ENCODE measurements at regions of chr16 and their contacts with region 1.

Region 1: GRCh38 chr16:66515596-66516510 is 34.1 kb downstream of the TK2 start:
- DNase-seq: peak; percentile 54
- H3K4me3 Mint-ChIP-seq: peak overlapping the region; percentile 52
- H3K27ac Mint-ChIP-seq: peak overlapping the region; percentile 91
- H3K4me1 Mint-ChIP-seq: peaks cover 66% of the 10 kb centered on the region
- H3K27me3 Mint-ChIP-seq: peaks cover 4% of the 10 kb centered on the region

Region 2: GRCh38 chr16:66416939-66417700 is 98.7 kb before region 1 on chr16:
- CTCF ChIA-PET with region 1: no interaction called
- DNase-seq: no peak
- H3K4me3 Mint-ChIP-seq: no peak overlapping the region
- H3K27ac Mint-ChIP-seq: no peak overlapping the region
- H3K4me1 Mint-ChIP-seq: peaks cover 9% of the 10 kb centered on the region
- H3K27me3 Mint-ChIP-seq: peaks cover 25% of the 10 kb centered on the region

Region 3: GRCh38 chr16:66483689-66484481 is 32.0 kb before region 1 on chr16:
- CTCF ChIA-PET with region 1: interaction called, 11 read pairs
- DNase-seq: peak; percentile 84
- H3K4me3 Mint-ChIP-seq: no peak overlapping the region
- H3K27ac Mint-ChIP-seq: no peak overlapping the region
- H3K4me1 Mint-ChIP-seq: peaks cover 24% of the 10 kb centered on the region
- H3K27me3 Mint-ChIP-seq: peaks cover 21% of the 10 kb centered on the region

Region 4: GRCh38 chr16:66552286-66553177 is 36.7 kb after region 1 on chr16 and contains the start of gene CKLF:
- CTCF ChIA-PET with region 1: interaction called, 39 read pairs
- DNase-seq: peak; percentile 92
- H3K4me3 Mint-ChIP-seq: peak within 1 kb of the TSS; percentile 89
- H3K27ac Mint-ChIP-seq: peak within 1 kb of the TSS; percentile 92
- H3K4me1 Mint-ChIP-seq: peaks cover 79% of the 10 kb centered on the region
- H3K27me3 Mint-ChIP-seq: peaks cover 4% of the 10 kb centered on the region

Measured in activated naive CD4-positive, alpha-beta T cell treated with anti-CD3 and anti-CD28 coated beads, Interleukin-2, amount 10 ng/mL, durations not matched to agents 7 days and 5 days (primary cell).